Adrenal gland (tissue), 19 donors: ENCODE measurements at regions of chr14 and their contacts with region 1.

Region 1: DNA sequence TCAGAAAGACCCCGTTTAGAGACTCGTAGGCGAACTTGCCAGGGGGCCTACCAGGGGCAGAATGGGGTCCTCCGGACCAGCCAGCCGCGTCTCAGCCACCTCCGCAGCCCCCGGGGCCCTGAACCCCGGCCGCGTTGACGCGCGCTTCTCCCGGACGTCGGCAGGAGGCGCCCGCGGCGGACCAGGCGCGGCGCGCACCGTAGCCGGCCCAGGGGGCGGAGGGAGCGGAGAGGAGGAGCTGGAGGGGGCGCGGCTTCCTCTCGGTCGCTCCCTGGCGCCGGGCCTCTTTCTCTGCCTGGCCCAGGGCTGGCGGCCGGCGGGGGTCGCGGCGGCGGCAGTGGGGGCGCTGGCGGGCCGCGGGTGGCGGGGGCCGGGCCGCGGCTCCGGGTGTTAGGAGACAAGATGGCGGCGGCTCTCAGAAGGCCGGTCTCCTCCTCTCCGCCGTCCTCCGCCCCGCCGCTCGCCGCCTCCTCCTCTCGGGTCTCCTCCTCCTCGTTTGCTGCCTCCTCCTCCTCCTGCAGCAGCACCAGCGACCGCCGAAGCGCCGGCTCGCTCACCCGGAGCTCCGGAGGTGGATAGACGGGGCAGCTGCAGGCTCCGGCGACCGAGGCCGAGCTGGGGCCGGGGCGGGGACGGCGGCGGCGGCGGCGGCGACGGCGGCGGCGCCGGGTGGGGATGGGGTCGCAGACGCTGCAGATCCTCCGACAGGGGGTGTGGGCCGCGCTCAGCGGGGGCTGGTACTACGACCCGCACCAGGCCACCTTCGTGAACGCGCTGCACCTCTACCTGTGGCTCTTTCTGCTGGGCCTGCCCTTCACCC is at the start of gene PCNX1:
- DNase-seq: peak; percentile 87 to 91 (median 90)
- H3K4me3 ChIP-seq: peak within 1 kb of the TSS; percentile 33 to 94 (median 81)
- H3K27ac ChIP-seq: peak within 1 kb of the TSS; percentile 85 to 99 (median 97)
- H3K4me1 ChIP-seq: peaks cover 28 to 62% of the 10 kb centered on the region in 2 donors
- H3K27me3 ChIP-seq: no peaks in the 10 kb centered on the region
- CTCF ChIP-seq: peak; percentile 39 to 91 (median 74)
- POLR2A ChIP-seq: peak; percentile 71 to 82
- total RNA-seq, gene PCNX1: 84.1 to 196 (median 121) TPM

Region 2: DNA sequence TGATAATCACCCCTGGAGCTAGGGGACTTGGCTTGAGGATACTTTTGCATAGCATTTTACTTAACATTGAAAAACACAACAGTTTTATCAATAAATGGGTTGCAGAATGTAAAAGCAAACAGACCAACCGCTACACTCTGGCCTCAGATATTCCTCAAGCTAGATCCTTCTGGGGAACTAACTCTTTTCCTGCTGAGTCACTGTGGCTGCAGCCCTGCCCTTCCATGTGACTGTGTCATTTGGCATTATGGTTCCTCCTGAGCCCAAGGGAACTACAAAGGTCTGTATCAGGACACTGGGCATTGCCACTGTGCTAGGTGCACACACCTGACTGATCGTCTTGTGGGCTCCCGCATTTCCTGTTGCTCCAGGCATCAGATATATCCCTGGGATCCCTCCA is 209.1 kb before region 1 on chr14:
- intact Hi-C with region 1: no loop called
- DNase-seq: peak in 4 of 7 donors; percentile 11 to 23 (median 16)
- H3K4me3 ChIP-seq: no peak overlapping the region
- H3K27ac ChIP-seq: no peak overlapping the region
- H3K4me1 ChIP-seq: no peaks in the 10 kb centered on the region
- H3K27me3 ChIP-seq: no peaks in the 10 kb centered on the region
- CTCF ChIP-seq: no peak
- POLR2A ChIP-seq: no peak

Region 3: GRCh38 chr14:70754989-70755388 is 152.4 kb before region 1 on chr14:
- intact Hi-C with region 1: no loop called
- DNase-seq: peak in 2 of 7 donors; percentile 4 to 24
- H3K4me3 ChIP-seq: no peak overlapping the region
- H3K27ac ChIP-seq: no peak overlapping the region
- H3K4me1 ChIP-seq: no peaks in the 10 kb centered on the region
- H3K27me3 ChIP-seq: no peaks in the 10 kb centered on the region
- CTCF ChIP-seq: no peak
- POLR2A ChIP-seq: no peak

Region 4: GRCh38 chr14:70972107-70972976 is 65.0 kb after region 1 on chr14:
- intact Hi-C with region 1: loop called (anchors 5 to 10 kb)
- DNase-seq: peak; percentile 73 to 96 (median 88)
- H3K4me3 ChIP-seq: no peak overlapping the region
- H3K27ac ChIP-seq: peak overlapping the region in 2 of 5 donors; percentile 3 to 13
- H3K4me1 ChIP-seq: peaks cover 10 to 12% of the 10 kb centered on the region in 2 donors
- H3K27me3 ChIP-seq: no peaks in the 10 kb centered on the region
- CTCF ChIP-seq: peak; percentile 87 to 98 (median 91)
- POLR2A ChIP-seq: no peak